ENCODE measurements at regions of chr1 and their contacts with region 1.

Region 1: DNA sequence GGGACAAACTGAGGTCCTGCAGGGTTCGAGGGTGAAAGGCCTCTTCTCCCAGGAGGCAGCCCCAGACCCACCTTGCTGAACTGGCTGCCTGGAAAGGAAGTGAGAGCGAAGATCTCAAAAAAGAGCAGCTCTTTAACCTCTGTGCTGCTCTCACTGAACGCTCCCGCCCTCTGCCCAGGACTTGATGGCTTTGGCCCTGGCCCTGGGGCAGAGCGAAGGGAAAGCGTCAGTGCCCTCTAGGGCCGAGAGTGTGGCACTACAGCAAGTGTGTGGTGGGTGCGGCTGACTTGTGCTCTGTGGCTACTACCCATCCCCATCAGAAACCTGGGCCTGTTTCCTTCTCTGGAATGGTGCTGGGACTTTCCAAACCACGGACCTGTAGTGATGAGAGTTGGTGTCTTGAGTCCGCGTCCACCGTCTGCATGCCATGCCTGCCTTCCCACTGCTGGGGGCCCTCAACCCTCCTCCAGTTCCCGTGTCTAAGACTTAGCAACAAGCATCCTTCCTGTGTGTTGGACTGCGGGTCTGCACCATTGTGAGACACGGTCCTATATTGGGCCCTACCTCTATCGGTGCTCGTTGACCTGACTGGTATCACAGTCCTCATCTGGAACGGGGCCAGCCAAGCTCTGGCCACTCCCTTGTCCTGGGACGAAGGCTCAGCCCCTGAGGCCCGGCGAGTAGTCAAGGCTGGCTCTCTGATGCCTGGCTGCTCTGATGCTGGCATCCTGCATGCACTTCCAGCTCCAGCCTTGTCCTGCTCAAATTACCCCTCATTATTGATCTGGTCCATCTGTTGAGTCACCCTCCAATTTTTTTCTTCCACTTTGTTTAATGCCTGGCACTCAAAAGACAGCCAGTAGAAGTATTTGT is 180.3 kb downstream of the DISC1 start:
- DNase-seq: peak; percentile 78
- ATAC-seq: peak; percentile 53
- H3K4me3 ChIP-seq: no peak overlapping the region
- H3K27ac ChIP-seq: no peak overlapping the region
- H3K4me1 ChIP-seq: peaks cover 19% of the 10 kb centered on the region
- H3K27me3 ChIP-seq: no peaks in the 10 kb centered on the region
- CTCF ChIP-seq: peak; percentile 79

Region 2: GRCh38 chr1:231376875-231377549 is 429.8 kb before region 1 on chr1:
- CTCF ChIA-PET with region 1: no interaction called
- POLR2A ChIA-PET with region 1: no interaction called
- intact Hi-C with region 1: no loop called
- DNase-seq: peak; percentile 20
- ATAC-seq: 0 out of 2 replicates have a peak, but pooled peaks have one; percentile 27
- H3K4me3 ChIP-seq: no peak overlapping the region
- H3K27ac ChIP-seq: no peak overlapping the region
- H3K4me1 ChIP-seq: no peaks in the 10 kb centered on the region; the same call in 1 of the 2 replicates
- H3K27me3 ChIP-seq: no peaks in the 10 kb centered on the region
- CTCF ChIP-seq: no peak

Region 3: GRCh38 chr1:231828182-231828920 is 21.5 kb after region 1 on chr1:
- CTCF ChIA-PET with region 1: no interaction called
- POLR2A ChIA-PET with region 1: no interaction called
- intact Hi-C with region 1: loop called (anchors 1 kb)
- DNase-seq: peak; percentile 99
- ATAC-seq: peak; percentile 88
- H3K4me3 ChIP-seq: peak overlapping the region; percentile 51
- H3K27ac ChIP-seq: peak overlapping the region; percentile 97
- H3K4me1 ChIP-seq: peaks cover 38% of the 10 kb centered on the region
- H3K27me3 ChIP-seq: no peaks in the 10 kb centered on the region
- CTCF ChIP-seq: no peak

Measured in PC-3 (cell line).